ENCODE measurements at regions of chr13 and their contacts with region 1.

Region 1: GRCh38 chr13:49976314-49977258 is 20.3 kb upstream of the TRIM13 start:
- DNase-seq: peak; percentile 83
- ATAC-seq: peak; percentile 85
- H3K4me3 Mint-ChIP-seq: no peak overlapping the region
- H3K27ac Mint-ChIP-seq: no peak overlapping the region
- H3K4me1 Mint-ChIP-seq: peaks cover 2% of the 10 kb centered on the region
- H3K27me3 Mint-ChIP-seq: no peaks in the 10 kb centered on the region
- CTCF ChIP-seq: peak; percentile 89

Region 2: DNA sequence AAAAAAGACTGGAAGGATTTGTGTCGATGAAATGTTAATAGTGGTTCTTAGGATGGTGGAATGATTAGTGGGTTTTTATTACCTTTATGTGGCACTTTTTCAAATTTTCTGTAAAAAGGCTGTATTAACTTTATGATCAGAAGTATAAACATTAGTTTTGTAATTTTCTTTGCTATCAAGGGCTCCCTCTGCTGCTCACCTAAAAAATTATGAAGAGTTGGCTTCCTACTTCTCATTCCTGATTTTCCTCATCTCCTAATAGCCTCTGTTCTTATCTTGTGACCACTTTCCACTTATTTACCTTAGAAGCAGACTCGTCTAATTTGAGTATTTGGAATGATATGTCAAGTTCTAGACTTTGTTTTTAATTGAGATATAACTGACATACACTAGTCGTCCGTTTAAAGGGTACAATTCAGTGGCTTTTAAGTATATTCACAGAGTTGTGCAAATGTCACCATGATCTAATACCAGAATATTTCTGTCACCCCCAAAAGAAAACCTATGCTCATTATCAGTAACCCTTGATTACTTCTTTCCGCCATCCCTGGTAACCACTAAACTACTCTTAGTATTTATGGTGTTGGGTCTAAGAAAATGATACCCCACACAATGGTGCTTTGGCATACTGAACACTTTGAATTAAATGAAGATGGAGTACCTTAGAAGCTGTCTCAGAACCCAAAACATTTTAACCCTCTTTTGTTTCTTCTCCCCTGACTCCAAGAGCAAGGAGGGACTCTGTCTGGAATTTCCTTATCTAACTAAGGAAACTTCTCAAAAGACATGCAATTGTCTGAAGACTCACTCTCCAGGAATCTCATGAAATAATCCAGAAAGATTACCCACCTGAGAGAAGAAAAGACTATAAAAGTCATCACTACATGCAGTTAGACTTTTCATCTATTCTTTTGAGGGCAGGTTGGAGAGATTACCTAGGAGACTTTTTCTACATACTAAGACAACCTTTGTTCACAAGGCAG is 555.6 kb after region 1 on chr13:
- CTCF ChIA-PET with region 1: interaction called, 9 read pairs
- POLR2A ChIA-PET with region 1: no interaction called
- intact Hi-C with region 1: loop called (anchors 5 kb)
- DNase-seq: no peak
- ATAC-seq: no peak
- H3K4me3 Mint-ChIP-seq: no peak overlapping the region
- H3K27ac Mint-ChIP-seq: no peak overlapping the region
- H3K4me1 Mint-ChIP-seq: peaks cover 13% of the 10 kb centered on the region
- H3K27me3 Mint-ChIP-seq: no peaks in the 10 kb centered on the region
- CTCF ChIP-seq: peak; percentile 50

Region 3: GRCh38 chr13:50801087-50801931 is 824.7 kb after region 1 on chr13:
- CTCF ChIA-PET with region 1: interaction called, 27 read pairs
- POLR2A ChIA-PET with region 1: no interaction called
- intact Hi-C with region 1: loop called (anchors 10 kb)
- DNase-seq: peak; percentile 71
- ATAC-seq: peak; percentile 98
- H3K4me3 Mint-ChIP-seq: no peak overlapping the region
- H3K27ac Mint-ChIP-seq: no peak overlapping the region
- H3K4me1 Mint-ChIP-seq: peaks cover 9% of the 10 kb centered on the region
- H3K27me3 Mint-ChIP-seq: no peaks in the 10 kb centered on the region
- CTCF ChIP-seq: peak; percentile 71

Region 4: GRCh38 chr13:51070005-51070649 is 1093.5 kb after region 1 on chr13:
- CTCF ChIA-PET with region 1: interaction called, 5 read pairs
- POLR2A ChIA-PET with region 1: no interaction called
- intact Hi-C with region 1: loop called (anchors 2 kb)
- DNase-seq: peak; percentile 89
- ATAC-seq: peak; percentile 90
- H3K4me3 Mint-ChIP-seq: no peak overlapping the region
- H3K27ac Mint-ChIP-seq: no peak overlapping the region
- H3K4me1 Mint-ChIP-seq: peaks cover 5% of the 10 kb centered on the region
- H3K27me3 Mint-ChIP-seq: peaks cover 11% of the 10 kb centered on the region
- CTCF ChIP-seq: peak; percentile 96

Measured in activated CD8-positive, alpha-beta T cell treated with anti-CD3 and anti-CD28 coated beads for 36 hours (primary cell).